ENCODE measurements at regions of chr2 and their contacts with region 1.

Region 1: GRCh38 chr2:166127217-166128155 is at the start of gene SCN1A:
- DNase-seq: peak in 30 of 42 donors; percentile 6 to 70 (median 32)

Region 2: DNA sequence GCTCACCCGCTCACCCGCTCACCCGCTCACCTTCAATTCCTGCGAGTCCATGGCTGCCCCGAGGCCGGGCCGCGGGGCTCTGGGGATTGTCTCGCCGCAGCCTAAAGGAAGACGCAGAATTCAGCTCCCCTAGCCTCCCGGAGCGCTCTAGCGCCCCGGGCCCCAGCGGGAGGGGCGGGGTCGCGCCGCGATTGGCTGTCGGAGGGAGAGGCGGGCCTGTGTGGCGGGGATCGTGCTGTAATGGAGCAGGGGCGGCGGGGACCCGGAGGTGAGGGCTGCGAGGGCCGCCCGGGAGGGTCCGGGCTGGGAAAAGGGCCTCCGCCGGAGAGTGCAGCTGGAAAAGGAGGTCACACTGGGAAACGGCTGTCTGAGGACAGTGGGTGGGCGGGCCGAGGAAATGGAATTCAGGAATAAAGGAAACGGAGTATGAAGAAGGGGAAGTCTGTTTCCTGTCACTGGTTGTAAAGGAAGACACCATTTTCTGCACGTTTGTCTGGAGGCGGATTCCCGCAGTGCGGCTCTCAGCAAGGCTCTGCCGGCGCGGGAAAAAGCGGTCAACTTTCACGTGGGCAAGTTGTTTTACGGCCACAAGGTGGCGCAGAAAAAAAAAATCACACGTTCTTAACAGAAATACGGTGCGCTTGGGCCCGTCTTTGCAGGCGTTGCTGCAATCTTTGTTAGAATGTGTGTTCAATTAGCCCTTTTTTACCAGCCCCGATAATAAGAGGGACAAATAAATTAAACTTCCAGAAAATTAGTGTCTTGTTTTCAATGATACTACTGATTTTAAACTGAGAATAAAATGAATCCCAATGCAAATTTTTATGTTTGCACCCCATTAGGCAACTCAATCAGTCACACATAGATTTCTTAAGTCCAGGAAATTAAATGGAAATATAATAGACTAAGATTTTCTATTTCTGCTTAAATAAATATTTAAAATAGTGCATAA is 173.6 kb before region 1 on chr2 and contains the start of gene TTC21B:
- intact Hi-C with region 1: loop called (anchors 10 kb)
- DNase-seq: peak; percentile 84 to 98 (median 97)

Region 3: DNA sequence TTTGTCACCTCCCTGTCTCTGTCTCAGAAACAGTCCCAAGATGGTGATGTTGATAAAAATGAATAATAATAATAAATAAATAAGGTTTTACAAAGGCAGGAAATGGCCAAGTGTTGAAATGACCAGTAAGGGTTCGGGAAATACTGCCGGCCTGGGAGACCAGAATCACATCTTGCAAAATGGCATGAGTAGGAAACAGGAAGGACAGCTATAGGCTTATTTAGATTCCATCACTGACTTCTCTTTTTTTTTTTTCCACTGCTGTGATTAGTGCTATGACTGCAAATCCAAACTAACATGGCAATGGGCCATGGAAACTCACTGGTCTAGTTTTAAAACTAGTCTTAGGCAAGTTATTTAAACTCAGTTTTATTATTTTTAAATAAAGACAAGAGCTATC is 60.3 kb before region 1 on chr2:
- intact Hi-C with region 1: loop called (anchors 10 kb)
- DNase-seq: no peak

Measured in head of caudate nucleus (tissue), 42 donors.